ENCODE measurements at regions of chr14 and their contacts with region 1.

Region 1: GRCh38 chr14:21092273-21093011 is 6.0 kb downstream of the ZNF219 start:
- H3K4me3 ChIP-seq: no peak overlapping the region
- H3K27ac ChIP-seq: no peak overlapping the region
- H3K4me1 ChIP-seq: peaks cover 8% of the 10 kb centered on the region; the same call in 1 of the 2 replicates
- CTCF ChIP-seq: peak; percentile 98

Region 2: DNA sequence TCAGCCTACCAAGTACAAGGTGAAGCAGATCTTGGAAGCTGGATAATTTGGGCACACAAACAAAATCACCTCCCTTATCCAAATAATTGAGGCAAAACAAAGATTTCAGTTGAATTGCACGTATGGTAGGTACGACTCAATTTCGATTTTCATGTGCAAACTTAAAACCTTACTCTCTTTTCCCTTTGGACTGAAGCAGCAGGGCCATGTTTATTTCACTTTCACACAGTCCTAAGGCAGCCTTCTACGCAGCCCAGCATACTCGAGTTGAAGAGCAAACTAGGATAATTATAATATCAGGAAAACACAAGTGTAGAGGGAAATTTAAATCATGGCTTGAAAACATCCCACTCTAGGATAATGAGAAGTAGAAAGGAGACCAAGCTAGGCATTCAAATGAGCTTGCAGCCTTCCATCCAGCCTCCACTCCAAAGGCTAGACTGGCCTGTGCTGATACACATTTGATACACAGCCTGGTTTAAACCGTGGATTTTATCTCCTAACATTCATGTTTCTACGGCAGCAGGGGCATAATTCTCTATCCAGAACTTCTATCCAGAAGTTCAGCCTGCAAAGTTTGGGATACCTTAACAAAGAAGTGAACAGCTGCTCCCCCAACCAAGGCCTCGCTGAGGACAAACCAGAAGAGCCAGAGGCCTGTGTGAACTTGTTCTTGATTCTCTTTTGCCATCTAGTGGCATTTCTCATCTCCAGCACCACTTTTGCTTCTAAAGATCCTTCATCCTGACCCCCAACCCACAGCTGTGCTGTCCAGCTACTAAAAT is 52.7 kb before region 1 on chr14:
- CTCF ChIA-PET with region 1: interaction called, 17 read pairs
- POLR2A ChIA-PET with region 1: no interaction called
- H3K4me3 ChIP-seq: no peak overlapping the region
- H3K27ac ChIP-seq: no peak overlapping the region
- H3K4me1 ChIP-seq: no peaks in the 10 kb centered on the region
- CTCF ChIP-seq: peak; percentile 67

Region 3: GRCh38 chr14:21071225-21072030 is 21.0 kb before region 1 on chr14:
- CTCF ChIA-PET with region 1: interaction called, 64 read pairs
- POLR2A ChIA-PET with region 1: interaction called, 71 read pairs
- H3K4me3 ChIP-seq: peak overlapping the region; percentile 79
- H3K27ac ChIP-seq: peak overlapping the region; percentile 86
- H3K4me1 ChIP-seq: peaks cover 16% of the 10 kb centered on the region
- CTCF ChIP-seq: no peak

Region 4: GRCh38 chr14:21103710-21104447 is 11.4 kb after region 1 on chr14:
- CTCF ChIA-PET with region 1: interaction called, 175 read pairs
- POLR2A ChIA-PET with region 1: interaction called, 9 read pairs
- H3K4me3 ChIP-seq: peak overlapping the region; percentile 49
- H3K27ac ChIP-seq: peak overlapping the region; percentile 99
- H3K4me1 ChIP-seq: peaks cover 25% of the 10 kb centered on the region
- CTCF ChIP-seq: peak; percentile 95

Measured in HEK293 (cell line).